GM23248 (cell line): ENCODE measurements at regions of chr3 and their contacts with region 1.

Region 1: GRCh38 chr3:189961525-189962161 is 159.1 kb downstream of the P3H2 start:
- DNase-seq: peak; percentile 85
- H3K4me3 ChIP-seq: peak overlapping the region; percentile 25; the same call in 1 of the 2 replicates
- H3K27ac ChIP-seq: no peak overlapping the region
- H3K4me1 ChIP-seq: 0 out of 2 replicates have a peak, but pooled peaks cover 3% of the 10 kb centered on the region
- H3K27me3 ChIP-seq: no peaks in the 10 kb centered on the region

Region 2: GRCh38 chr3:188819939-188820338 is 1141.7 kb before region 1 on chr3:
- in situ Hi-C with region 1: no loop called
- DNase-seq: peak; percentile 57
- H3K4me3 ChIP-seq: no peak overlapping the region
- H3K27ac ChIP-seq: no peak overlapping the region
- H3K4me1 ChIP-seq: peaks cover 17% of the 10 kb centered on the region
- H3K27me3 ChIP-seq: no peaks in the 10 kb centered on the region

Region 3: GRCh38 chr3:190197346-190197763 is 235.7 kb after region 1 on chr3:
- in situ Hi-C with region 1: loop called (anchors 5 kb)
- DNase-seq: no peak
- H3K4me3 ChIP-seq: no peak overlapping the region
- H3K27ac ChIP-seq: no peak overlapping the region
- H3K4me1 ChIP-seq: peaks cover 10% of the 10 kb centered on the region
- H3K27me3 ChIP-seq: no peaks in the 10 kb centered on the region

Region 4: DNA sequence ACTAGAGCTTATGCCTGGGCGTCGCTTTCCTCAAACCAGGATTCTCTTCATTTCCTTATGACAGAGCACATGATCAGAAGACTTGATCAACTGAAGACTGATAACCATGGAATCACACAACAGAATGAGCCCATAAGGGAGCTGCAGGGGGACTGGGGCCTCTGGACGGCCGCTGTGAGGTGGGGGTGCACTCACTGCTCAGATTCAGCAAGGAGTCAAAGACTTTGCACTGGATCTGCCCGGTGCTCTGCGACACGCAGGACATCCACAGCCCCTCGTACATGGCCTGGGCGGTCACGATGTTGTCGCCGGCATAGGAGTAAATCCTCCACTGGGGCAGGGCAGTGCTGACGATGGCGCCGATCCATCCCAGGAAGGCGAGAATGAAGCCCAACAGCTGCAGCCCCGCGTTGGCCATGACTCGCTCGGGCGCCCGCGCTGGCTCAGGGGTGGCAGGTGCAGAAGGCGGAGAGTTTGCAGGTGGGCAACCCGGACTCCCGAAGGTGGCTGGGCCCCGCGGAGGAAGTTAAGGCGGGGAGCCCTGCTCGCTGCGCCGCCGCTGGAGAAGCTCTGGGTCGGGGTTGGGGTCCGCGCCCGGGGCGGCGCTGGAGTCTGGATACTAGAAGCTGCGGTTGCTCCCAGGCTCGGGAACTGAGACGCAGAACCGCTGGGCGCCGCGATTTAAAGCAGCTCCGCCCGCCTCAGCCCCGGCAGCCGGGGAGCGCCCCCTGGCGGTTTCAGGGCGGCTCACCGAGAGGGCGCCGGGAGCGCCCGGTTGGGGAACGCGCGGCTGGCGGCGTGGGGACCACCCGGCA is 360.4 kb after region 1 on chr3 and contains the start of gene CLDN1:
- in situ Hi-C with region 1: loop called (anchors 10 kb)
- DNase-seq: peak; percentile 90
- H3K4me3 ChIP-seq: peak within 1 kb of the TSS; percentile 74
- H3K27ac ChIP-seq: no peak within 1 kb of the TSS
- H3K4me1 ChIP-seq: peaks cover 18% of the 10 kb centered on the region
- H3K27me3 ChIP-seq: no peaks in the 10 kb centered on the region
- total RNA-seq, gene CLDN1: 0.32 and 0.38 TPM in 2 replicates

Region 5: GRCh38 chr3:190424478-190425439 is 463.1 kb after region 1 on chr3:
- in situ Hi-C with region 1: loop called (anchors 25 kb)
- DNase-seq: peak; percentile 77
- H3K4me3 ChIP-seq: no peak overlapping the region
- H3K27ac ChIP-seq: no peak overlapping the region
- H3K4me1 ChIP-seq: peaks cover 6% of the 10 kb centered on the region
- H3K27me3 ChIP-seq: no peaks in the 10 kb centered on the region